ENCODE measurements at regions of chr18 and their contacts with region 1.

Region 1: DNA sequence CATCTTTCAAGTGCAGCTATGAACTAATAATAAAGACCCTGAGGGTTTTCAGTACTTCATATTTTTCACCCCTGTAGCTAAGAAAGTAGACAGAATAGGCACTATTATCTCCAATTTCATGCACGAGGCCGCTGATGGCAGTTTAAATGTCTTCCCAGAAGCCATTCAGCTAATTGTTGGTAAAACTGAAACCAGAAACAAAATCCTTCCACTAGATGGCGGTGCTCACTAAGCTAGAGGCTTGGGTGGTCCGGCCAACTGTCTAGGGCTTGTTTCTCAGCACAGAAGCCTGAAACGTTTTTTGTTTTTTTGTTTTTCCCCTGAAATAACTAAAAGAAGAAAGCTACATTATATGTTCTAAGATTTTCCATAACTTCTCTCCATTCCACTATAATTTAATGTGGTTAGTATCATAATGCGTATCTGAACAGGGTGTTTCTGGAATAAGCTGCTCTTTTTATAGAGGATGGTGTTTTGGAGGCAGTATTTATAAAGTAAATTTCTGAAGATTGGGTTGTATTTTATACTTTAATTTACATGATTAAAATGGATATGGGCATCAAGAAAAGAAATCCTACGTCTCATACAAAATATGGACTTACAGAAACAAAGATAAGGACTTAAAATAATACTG is 159.4 kb downstream of the PIK3C3 start:
- DNase-seq: peak; percentile 53 to 73 (median 56)
- H3K4me3 ChIP-seq: no peak overlapping the region
- H3K27ac ChIP-seq: peak overlapping the region in 1 of 2 donors; percentile 41
- H3K4me1 ChIP-seq: no peaks in the 10 kb centered on the region
- H3K27me3 ChIP-seq: no peaks in the 10 kb centered on the region
- CTCF ChIP-seq: peak; percentile 79 to 82 (median 82)
- EP300 ChIP-seq: no peak
- POLR2A ChIP-seq: no peak

Region 2: DNA sequence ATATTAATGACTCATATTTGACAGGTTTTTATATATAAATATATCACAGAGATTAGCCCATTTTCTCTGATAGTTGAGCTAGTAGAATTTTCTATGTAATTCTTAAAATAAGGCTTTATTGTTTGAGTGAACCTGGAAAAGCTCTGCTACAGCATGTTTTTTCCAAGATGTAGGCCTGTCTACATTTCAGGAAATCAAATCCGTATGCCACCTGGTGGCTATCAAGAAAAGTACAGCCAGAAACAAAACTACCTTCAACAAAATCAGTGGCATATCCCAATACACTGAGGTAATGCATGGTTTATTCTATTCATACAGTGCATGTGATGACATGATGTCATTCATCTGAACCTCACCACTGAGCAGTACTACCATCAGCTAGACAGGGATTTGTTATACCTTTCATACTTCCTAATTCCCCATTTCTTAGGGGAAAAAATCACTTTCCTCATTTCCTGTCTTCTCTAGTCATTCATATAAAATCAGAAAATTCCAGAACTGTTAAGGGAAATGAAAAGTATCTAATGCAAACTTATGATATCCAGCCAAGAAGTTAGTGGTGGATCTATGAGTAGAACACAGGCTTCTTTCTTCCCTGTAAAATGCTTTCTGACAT is 1473.2 kb after region 1 on chr18:
- intact Hi-C with region 1: loop called in 1 of 4 experiments (anchors 10 kb)
- DNase-seq: peak in 1 of 5 donors; percentile 15
- H3K4me3 ChIP-seq: no peak overlapping the region
- H3K27ac ChIP-seq: no peak overlapping the region
- H3K4me1 ChIP-seq: no peaks in the 10 kb centered on the region
- H3K27me3 ChIP-seq: no peaks in the 10 kb centered on the region
- CTCF ChIP-seq: peak in 1 of 3 donors; percentile 48
- EP300 ChIP-seq: no peak
- POLR2A ChIP-seq: no peak

Region 3: DNA sequence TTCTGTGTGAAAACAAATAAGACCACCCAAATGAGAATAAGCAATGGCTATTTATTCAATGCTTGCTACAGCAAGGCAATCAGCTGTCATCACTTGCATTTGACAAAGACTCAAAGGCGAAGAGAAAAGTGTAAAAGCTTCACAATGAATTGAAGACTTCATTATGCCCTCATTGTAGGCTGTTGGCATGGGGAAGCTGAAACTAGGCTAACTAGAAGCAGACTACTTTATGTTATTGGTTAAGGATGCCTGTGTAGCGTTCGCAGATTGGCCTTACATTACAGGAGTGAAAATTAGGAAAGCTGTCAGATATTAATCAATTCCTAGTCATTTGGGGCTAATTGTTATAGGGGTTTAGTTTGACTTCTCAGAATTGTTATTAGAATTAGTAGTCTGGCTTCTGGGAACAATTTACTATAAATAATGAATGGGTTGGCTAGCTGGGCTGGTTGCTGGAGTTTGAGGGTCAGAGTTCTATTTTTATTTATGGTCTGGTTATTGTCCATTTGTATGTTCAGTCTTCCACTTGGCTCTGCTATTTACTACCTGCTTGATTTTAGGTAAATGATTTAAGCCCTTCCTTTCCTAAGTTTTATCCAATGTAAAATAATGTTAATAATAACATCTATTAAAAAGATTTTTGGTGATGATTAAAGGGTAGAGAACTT is 1600.0 kb after region 1 on chr18:
- intact Hi-C with region 1: no loop called
- DNase-seq: no peak
- H3K4me3 ChIP-seq: no peak overlapping the region
- H3K27ac ChIP-seq: no peak overlapping the region
- H3K4me1 ChIP-seq: no peaks in the 10 kb centered on the region
- H3K27me3 ChIP-seq: no peaks in the 10 kb centered on the region
- CTCF ChIP-seq: no peak
- EP300 ChIP-seq: no peak
- POLR2A ChIP-seq: no peak

Measured in ovary (tissue), 10 donors.